Activated CD4-positive, alpha-beta T cell treated with anti-CD3 and anti-CD28 coated beads for 36 hours (primary cell): ENCODE measurements at regions of chr21 and their contacts with region 1.

Region 1: DNA sequence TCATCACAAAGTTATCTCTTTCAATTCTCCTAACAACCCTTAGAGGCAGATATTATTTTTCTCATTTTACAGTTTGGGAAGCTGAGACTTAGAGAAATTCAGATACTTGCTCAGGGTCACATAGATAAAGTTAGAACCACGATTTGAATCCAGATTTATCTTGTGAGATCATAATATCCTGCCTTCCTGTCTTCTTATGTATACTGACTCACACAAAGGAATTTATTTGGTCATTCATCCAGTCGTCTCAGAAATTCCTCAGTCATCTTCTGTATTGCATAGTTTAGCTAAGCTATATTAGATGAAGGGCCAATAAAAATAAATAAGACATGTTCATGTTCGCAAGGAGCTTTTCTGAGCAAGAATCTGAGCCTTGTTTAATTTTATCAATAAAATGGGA is 35.8 kb upstream of the RUNX1 start:
- DNase-seq: no peak
- ATAC-seq: no peak
- H3K4me3 Mint-ChIP-seq: no peak overlapping the region
- H3K27ac Mint-ChIP-seq: no peak overlapping the region
- H3K4me1 Mint-ChIP-seq: peaks cover 44% of the 10 kb centered on the region
- H3K27me3 Mint-ChIP-seq: no peaks in the 10 kb centered on the region

Region 2: GRCh38 chr21:34946916-34947534 is 137.8 kb before region 1 on chr21:
- CTCF ChIA-PET with region 1: no interaction called
- POLR2A ChIA-PET with region 1: interaction called, 11 read pairs
- intact Hi-C with region 1: loop called in 1 of 2 experiments (anchors 1 kb)
- DNase-seq: no peak
- ATAC-seq: peak; percentile 65
- H3K4me3 Mint-ChIP-seq: peak overlapping the region; percentile 13
- H3K27ac Mint-ChIP-seq: peak overlapping the region; percentile 95
- H3K4me1 Mint-ChIP-seq: peaks cover 92% of the 10 kb centered on the region
- H3K27me3 Mint-ChIP-seq: no peaks in the 10 kb centered on the region

Region 3: DNA sequence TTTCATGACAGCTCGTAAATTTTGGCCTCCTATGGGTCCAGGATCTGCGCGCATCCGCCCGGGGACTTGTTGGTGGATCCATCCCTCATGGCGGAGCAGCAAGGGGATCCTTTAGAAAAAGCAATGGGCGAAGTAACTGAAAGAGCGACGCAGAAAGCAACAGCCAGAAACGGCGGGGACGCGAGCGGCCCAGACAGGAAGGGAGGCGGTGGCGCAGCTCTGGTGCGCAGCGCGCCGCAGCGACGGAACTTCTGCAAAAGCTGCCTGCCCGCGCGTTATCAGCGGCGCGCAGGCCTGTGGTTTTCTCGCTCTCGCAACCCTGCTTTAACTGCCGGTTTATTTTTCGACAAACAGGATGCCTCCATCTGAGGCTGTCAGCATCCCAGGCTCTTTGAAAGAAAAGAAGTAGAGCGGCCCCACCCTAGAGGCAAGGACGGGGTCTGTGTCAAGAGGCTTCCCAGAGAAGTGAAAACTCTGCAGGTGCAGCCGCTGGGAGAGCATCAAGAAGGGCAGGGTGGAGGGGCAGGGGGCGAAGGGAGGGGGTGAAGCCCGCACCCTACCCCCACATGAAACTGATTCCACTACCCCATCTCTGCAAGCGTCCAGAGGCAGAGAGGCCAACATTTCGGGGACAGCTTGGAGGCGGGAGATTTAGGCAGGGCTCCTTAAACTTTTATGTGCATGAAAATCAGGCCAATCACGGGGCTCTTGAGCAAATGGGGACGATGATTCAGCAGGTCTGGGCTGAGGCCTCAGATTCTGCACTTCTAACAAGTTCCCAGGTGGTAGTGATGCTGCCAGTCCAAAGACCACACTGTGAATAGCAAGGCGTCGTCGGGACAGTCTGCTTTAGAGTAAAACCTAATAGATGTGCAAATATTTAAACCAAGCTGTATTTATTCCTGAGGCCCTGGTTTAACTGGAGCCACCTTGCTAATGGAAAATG is 58.0 kb before region 1 on chr21:
- CTCF ChIA-PET with region 1: no interaction called
- POLR2A ChIA-PET with region 1: interaction called, 5 read pairs
- intact Hi-C with region 1: loop called in 1 of 2 experiments (anchors 1 kb)
- DNase-seq: peak; percentile 92
- ATAC-seq: peak; percentile 68
- H3K4me3 Mint-ChIP-seq: peak overlapping the region; percentile 75
- H3K27ac Mint-ChIP-seq: peak overlapping the region; percentile 97
- H3K4me1 Mint-ChIP-seq: peaks cover 88% of the 10 kb centered on the region
- H3K27me3 Mint-ChIP-seq: no peaks in the 10 kb centered on the region

Region 4: DNA sequence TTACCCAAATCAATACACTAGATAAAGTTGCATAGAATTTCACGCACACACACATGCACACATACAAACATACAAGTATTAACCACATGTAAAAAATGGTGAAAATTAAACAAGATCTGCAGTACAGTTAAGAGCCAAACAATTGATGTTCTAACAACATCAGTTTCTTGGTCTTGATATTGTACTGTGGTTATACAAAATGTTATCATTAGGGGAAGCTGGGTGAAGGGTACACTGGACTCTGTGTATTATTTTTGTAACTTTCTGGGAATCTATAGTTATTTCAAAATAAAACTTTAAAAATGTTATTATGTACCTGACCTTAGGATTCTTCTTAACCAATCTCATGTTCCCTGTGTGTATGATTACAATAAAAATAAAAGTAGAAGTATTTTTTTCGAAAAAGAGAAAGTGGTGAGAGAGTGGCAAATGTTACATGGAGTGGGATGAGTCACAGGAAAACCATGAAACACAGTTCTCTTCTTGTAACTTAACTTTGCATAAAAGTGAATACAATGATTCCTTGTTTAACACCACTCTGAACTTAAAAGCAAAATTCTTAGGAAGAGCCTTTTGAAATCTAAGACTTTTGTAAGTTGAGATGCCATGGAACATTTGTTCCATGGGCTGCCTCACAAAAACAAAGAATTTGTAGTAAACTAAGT is 65.8 kb after region 1 on chr21:
- CTCF ChIA-PET with region 1: interaction called, 5 read pairs
- POLR2A ChIA-PET with region 1: interaction called, 6 read pairs
- intact Hi-C with region 1: loop called (anchors 2 kb)
- DNase-seq: no peak
- ATAC-seq: peak; percentile 72
- H3K4me3 Mint-ChIP-seq: peak overlapping the region; percentile 18
- H3K27ac Mint-ChIP-seq: peak overlapping the region; percentile 90
- H3K4me1 Mint-ChIP-seq: peaks cover 63% of the 10 kb centered on the region
- H3K27me3 Mint-ChIP-seq: no peaks in the 10 kb centered on the region

Region 5: GRCh38 chr21:35256467-35256988 is 171.7 kb after region 1 on chr21:
- CTCF ChIA-PET with region 1: interaction called, 3 read pairs
- POLR2A ChIA-PET with region 1: no interaction called
- intact Hi-C with region 1: loop called in 1 of 2 experiments (anchors 1 kb)
- DNase-seq: no peak
- ATAC-seq: no peak
- H3K4me3 Mint-ChIP-seq: no peak overlapping the region
- H3K27ac Mint-ChIP-seq: no peak overlapping the region
- H3K4me1 Mint-ChIP-seq: peaks cover 32% of the 10 kb centered on the region
- H3K27me3 Mint-ChIP-seq: peaks cover 5% of the 10 kb centered on the region

Region 6: DNA sequence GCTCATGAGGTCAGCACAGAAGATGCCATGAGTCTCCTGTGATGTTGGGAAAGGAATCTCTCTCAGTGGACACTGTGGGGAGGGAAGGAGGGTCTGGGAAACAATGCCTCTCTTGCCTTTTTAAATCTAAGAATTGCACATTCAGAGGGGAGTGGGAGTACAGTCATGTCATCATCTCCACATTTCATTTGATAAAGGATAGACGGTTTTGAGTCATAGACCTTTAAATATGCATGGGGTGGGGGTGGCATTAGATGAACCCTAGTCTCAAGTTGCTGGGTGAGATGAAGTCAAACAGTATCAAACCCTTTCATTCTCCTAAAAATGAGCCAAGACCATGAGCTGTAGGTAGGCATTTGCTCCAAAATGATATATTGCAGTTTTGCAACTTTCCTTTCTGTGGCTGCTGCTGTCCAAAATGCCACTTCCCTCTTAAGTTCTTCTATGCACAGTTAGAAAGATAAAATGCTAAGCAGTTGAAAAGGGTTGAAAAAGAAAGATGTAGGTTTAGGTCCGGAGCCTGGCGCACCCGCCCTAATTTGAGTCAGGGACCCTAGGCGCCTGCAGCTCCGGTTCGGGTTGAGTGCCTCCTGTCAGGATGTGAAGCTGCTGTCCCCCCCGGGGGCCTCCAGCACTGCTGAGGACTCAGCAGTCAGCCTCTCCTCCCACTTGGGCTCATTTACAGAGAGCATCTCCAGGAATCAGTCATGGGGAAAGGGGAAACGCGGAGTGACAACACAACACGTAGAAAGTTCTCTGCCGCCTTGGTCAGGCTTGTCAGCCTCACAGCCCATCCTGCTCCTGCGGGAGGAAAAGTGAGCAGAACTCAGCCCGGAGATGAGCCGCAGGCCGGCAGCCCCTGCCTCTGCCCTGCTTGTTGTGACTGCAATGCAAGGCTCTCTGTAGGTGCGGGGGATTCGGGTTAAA is 443.5 kb after region 1 on chr21:
- CTCF ChIA-PET with region 1: no interaction called
- POLR2A ChIA-PET with region 1: no interaction called
- intact Hi-C with region 1: loop called in 1 of 2 experiments (anchors 5 kb)
- DNase-seq: peak; percentile 79
- ATAC-seq: peak; percentile 88
- H3K4me3 Mint-ChIP-seq: peak overlapping the region; percentile 75
- H3K27ac Mint-ChIP-seq: peak overlapping the region; percentile 93
- H3K4me1 Mint-ChIP-seq: peaks cover 44% of the 10 kb centered on the region
- H3K27me3 Mint-ChIP-seq: no peaks in the 10 kb centered on the region